ENCODE measurements at regions of chr1 and their contacts with region 1.

Region 1: DNA sequence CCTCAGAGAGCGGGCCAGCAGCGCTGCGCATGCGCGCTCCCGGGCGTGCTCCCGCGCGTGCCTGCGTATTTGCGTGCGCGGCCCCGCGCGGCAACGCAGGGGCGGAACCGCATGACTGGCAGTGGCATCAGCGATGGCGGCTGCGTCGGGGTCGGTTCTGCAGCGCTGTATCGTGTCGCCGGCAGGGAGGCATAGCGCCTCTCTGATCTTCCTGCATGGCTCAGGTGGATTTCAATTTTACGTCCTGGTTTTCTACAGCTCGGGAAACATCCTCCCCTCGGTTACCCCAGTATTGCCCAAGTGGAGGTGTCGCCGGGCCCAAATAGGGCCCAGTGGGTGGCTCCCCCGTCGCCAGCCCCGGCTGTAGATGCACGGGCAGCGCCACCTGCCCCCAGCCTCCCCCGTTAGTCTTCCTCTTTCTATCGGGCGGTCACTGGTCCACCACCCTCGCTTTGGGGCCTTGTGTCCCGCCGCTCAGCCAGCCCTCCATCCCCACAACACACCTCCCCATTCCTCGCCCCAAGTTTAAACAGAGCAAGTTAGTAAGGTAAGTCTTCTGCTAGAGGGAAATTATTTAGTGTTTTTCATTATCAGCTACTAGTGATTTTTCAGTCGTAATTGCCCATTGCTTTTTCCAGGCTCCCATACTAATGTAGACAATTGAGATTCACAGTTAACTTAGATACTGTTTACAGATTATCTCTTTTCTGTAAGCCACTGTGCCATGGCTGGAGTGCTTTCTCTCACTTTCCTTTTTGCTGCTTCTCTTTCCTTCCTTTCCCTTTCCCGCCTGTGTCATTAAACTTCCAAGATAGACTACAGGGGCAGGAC is at the start of gene LYPLAL1:
- DNase-seq: peak; percentile 93
- ATAC-seq: peak; percentile 87
- H3K4me3 Mint-ChIP-seq: peak within 1 kb of the TSS; percentile 92
- H3K27ac Mint-ChIP-seq: peak within 1 kb of the TSS; percentile 99
- H3K4me1 Mint-ChIP-seq: peaks cover 49% of the 10 kb centered on the region
- H3K27me3 Mint-ChIP-seq: no peaks in the 10 kb centered on the region
- total RNA-seq, gene LYPLAL1: 25.3 to 27.9 TPM

Region 2: DNA sequence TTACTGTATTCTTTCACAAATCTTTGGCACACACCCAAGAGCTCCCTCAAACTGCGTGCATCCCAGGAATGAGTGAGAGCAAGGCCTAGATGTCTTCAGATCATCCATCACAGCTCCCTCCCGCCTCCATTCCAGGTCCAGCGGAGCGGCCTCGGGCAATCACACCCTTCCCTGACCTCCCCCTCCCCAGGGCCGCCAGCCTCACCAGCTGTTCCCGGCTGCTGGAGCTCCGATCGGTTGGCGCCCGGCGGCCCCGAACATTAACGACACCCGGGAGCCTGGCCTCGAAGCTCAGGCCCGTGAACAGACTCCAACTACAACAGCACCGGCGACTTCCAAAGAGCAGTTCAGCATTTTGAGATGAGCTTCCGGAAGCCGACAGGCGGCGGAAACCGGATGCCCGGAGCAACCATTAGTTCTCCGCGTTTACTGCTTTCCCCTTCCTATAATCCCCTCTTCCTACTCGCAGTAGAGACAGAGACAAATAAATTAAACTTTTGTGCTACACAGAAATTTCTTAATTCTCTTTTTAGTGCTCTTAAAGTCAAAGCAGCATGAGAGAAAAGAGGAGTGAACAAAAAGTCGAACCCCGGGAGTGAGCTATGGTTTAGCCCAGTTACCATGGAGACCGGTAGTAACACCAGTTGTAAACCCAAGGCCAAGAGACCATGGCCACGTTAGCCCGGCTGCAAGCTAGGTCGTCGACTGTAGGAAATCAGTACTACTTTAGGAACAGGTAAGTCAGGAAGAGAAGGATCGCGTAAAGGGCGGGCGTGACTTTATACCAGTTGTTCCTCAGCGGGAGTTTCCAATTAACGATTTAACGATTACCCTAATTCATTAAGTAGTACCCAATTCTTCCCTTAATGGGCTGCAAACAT is 1543.0 kb before region 1 on chr1 and contains the starts of genes GPATCH2 and SPATA17:
- CTCF ChIA-PET with region 1: no interaction called
- POLR2A ChIA-PET with region 1: no interaction called
- intact Hi-C with region 1: loop called in 1 of 2 experiments (anchors 10 kb)
- DNase-seq: peak; percentile 85
- ATAC-seq: peak; percentile 89
- H3K4me3 Mint-ChIP-seq: peak within 1 kb of the TSS; percentile 87
- H3K27ac Mint-ChIP-seq: peak within 1 kb of the TSS; percentile 100
- H3K4me1 Mint-ChIP-seq: peaks cover 34% of the 10 kb centered on the region
- H3K27me3 Mint-ChIP-seq: no peaks in the 10 kb centered on the region
- total RNA-seq, gene GPATCH2: 6.4 to 7.2 TPM
- total RNA-seq, gene SPATA17: 0.14 TPM in 1 of 2 experiments, not detected in the other

Region 3: DNA sequence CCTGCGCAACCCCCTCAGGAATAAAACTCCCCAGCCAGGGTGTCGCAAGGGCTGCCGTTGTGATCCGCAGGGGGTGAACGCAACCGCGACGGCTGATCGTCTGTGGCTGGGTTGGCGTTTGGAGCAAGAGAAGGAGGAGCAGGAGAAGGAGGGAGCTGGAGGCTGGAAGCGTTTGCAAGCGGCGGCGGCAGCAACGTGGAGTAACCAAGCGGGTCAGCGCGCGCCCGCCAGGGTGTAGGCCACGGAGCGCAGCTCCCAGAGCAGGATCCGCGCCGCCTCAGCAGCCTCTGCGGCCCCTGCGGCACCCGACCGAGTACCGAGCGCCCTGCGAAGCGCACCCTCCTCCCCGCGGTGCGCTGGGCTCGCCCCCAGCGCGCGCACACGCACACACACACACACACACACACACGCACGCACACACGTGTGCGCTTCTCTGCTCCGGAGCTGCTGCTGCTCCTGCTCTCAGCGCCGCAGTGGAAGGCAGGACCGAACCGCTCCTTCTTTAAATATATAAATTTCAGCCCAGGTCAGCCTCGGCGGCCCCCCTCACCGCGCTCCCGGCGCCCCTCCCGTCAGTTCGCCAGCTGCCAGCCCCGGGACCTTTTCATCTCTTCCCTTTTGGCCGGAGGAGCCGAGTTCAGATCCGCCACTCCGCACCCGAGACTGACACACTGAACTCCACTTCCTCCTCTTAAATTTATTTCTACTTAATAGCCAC is 828.1 kb before region 1 on chr1:
- CTCF ChIA-PET with region 1: no interaction called
- POLR2A ChIA-PET with region 1: no interaction called
- intact Hi-C with region 1: loop called (anchors 5 to 10 kb)
- DNase-seq: peak; percentile 59
- ATAC-seq: peak; percentile 74
- H3K4me3 Mint-ChIP-seq: no peak overlapping the region
- H3K27ac Mint-ChIP-seq: no peak overlapping the region
- H3K4me1 Mint-ChIP-seq: peaks cover 21% of the 10 kb centered on the region
- H3K27me3 Mint-ChIP-seq: peaks cover 48% of the 10 kb centered on the region

Region 4: DNA sequence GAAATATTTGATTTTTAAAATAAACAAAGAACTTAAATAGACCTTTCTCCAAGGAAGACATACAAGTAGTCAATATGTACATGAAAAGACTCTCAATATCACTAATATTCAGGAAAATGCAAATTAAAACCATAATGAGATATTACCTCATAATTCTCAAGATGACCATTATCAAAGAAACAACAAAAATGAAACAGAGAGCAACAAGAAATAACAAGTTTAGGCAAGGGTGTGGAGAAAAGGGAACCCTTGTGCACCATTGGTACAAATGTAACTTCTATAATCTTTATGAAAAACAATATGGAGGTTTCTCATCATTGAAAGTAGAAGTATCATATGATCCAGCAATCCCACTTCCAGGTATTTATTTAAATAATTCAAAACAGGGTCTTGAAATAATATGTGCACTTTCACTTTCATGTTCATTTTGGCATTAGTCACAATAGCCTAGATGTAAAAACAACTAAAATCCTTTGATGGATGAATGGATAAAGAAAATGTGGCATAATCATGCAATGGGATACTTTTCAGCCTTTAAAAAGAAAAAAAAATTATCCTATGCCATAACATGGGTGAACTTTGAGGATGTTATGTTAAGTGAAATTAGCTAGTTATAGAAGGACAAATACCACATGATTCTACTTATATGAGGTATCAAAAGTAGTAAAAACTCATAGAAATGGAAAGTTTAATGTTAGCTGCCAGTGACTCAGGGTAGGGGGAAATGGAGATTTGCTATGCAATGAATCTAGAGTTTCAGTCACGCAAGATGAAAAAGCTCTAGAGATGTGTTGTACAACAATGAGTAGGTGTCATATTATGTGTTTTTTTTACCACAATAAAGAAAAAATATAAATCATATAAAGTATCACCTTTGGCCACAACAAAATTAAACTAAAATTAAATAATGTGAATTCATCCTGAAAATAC is 114.8 kb before region 1 on chr1:
- CTCF ChIA-PET with region 1: no interaction called
- POLR2A ChIA-PET with region 1: no interaction called
- intact Hi-C with region 1: loop called in 1 of 2 experiments (anchors 5 kb)
- DNase-seq: no peak
- ATAC-seq: peak; percentile 83
- H3K4me3 Mint-ChIP-seq: no peak overlapping the region
- H3K27ac Mint-ChIP-seq: no peak overlapping the region
- H3K4me1 Mint-ChIP-seq: peaks cover 7% of the 10 kb centered on the region
- H3K27me3 Mint-ChIP-seq: peaks cover 2% of the 10 kb centered on the region

Region 5: DNA sequence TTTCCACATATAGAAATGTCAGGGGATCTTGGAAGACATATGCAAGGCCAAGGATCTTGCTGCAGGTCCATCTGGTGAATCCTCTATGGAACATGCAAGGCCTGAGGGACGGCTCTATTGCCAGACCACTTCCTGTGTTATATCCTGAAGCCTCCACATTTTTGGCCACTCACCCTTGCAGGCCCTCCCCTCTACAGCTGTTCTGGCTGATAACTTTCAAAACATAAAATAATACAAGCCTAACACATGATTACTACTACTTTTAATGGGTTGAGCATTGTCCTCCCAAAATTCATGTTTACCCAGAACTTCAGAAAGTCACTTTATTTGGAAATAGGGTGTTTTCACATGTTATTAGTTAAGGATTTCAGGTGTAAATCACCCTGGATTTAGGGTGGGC is 18.8 kb before region 1 on chr1:
- CTCF ChIA-PET with region 1: no interaction called
- POLR2A ChIA-PET with region 1: no interaction called
- intact Hi-C with region 1: no loop called
- DNase-seq: no peak
- ATAC-seq: no peak
- H3K4me3 Mint-ChIP-seq: no peak overlapping the region
- H3K27ac Mint-ChIP-seq: no peak overlapping the region
- H3K4me1 Mint-ChIP-seq: no peaks in the 10 kb centered on the region
- H3K27me3 Mint-ChIP-seq: peaks cover 6% of the 10 kb centered on the region

Region 6: DNA sequence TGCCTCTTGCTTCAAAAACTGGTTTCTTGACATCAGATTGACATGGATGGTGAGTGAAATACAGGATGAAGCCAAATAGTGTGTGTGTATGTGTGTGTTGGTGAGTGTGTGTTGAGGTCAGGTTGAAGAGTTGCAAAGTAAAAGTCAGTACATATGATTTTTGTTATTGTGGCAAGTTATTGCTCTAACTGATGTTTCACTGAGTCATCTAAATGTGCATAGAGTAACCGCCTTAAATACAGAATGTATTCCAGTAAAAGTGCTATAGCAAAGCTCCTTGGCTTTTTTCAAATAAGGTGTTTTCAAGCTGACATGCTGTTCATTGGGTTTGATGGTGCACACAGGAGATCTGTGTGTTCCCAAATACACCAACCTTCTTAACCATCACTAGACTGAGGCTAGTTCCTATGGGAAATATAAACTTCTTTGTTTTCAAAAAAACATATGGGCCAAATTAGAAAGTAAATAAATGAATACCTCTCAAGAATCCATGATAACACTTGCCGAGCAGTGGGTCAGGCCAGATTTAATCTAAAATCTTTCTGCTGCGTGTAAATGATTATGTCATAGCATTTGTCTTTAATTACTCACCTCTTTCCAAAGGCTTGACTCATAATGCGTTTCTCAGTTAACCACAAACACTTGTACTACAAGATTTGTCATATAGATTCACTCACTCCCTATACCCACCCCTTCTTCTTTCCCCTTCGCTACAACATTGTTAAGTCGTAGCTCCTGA is 150.8 kb after region 1 on chr1:
- CTCF ChIA-PET with region 1: no interaction called
- POLR2A ChIA-PET with region 1: no interaction called
- intact Hi-C with region 1: loop called in 1 of 2 experiments (anchors 10 kb)
- DNase-seq: peak; percentile 20
- ATAC-seq: peak; percentile 94
- H3K4me3 Mint-ChIP-seq: no peak overlapping the region
- H3K27ac Mint-ChIP-seq: no peak overlapping the region
- H3K4me1 Mint-ChIP-seq: peaks cover 11% of the 10 kb centered on the region
- H3K27me3 Mint-ChIP-seq: peaks cover 17% of the 10 kb centered on the region

Region 7: GRCh38 chr1:219405531-219406331 is 231.8 kb after region 1 on chr1:
- CTCF ChIA-PET with region 1: no interaction called
- POLR2A ChIA-PET with region 1: no interaction called
- intact Hi-C with region 1: no loop called
- DNase-seq: no peak
- ATAC-seq: no peak
- H3K4me3 Mint-ChIP-seq: no peak overlapping the region
- H3K27ac Mint-ChIP-seq: no peak overlapping the region
- H3K4me1 Mint-ChIP-seq: no peaks in the 10 kb centered on the region
- H3K27me3 Mint-ChIP-seq: peaks cover 3% of the 10 kb centered on the region